Right cardiac atrium (tissue), 5 donors: ENCODE measurements at regions of chr17 and their contacts with region 1.

Region 1: GRCh38 chr17:76506408-76507349 is 5.5 kb upstream of the RHBDF2 start:
- DNase-seq: peak; percentile 76 to 93 (median 91)
- ATAC-seq: peak; percentile 64 to 77
- H3K4me3 ChIP-seq: no peak overlapping the region
- H3K27ac ChIP-seq: no peak overlapping the region
- H3K4me1 ChIP-seq: peaks cover 6% of the 10 kb centered on the region
- H3K27me3 ChIP-seq: no peaks in the 10 kb centered on the region

Region 2: GRCh38 chr17:76292567-76292966 is 214.1 kb before region 1 on chr17:
- intact Hi-C with region 1: no loop called
- DNase-seq: peak in 2 of 3 donors; percentile 18 to 32
- ATAC-seq: no peak
- H3K4me3 ChIP-seq: no peak overlapping the region
- H3K27ac ChIP-seq: no peak overlapping the region
- H3K4me1 ChIP-seq: no peaks in the 10 kb centered on the region
- H3K27me3 ChIP-seq: no peaks in the 10 kb centered on the region

Region 3: GRCh38 chr17:76458580-76459490 is 47.8 kb before region 1 on chr17:
- intact Hi-C with region 1: loop called in 1 of 4 experiments (anchors 2 kb)
- DNase-seq: peak in 2 of 3 donors; percentile 74 to 80
- ATAC-seq: peak; percentile 67 to 70
- H3K4me3 ChIP-seq: no peak overlapping the region
- H3K27ac ChIP-seq: no peak overlapping the region
- H3K4me1 ChIP-seq: no peaks in the 10 kb centered on the region
- H3K27me3 ChIP-seq: no peaks in the 10 kb centered on the region

Region 4: DNA sequence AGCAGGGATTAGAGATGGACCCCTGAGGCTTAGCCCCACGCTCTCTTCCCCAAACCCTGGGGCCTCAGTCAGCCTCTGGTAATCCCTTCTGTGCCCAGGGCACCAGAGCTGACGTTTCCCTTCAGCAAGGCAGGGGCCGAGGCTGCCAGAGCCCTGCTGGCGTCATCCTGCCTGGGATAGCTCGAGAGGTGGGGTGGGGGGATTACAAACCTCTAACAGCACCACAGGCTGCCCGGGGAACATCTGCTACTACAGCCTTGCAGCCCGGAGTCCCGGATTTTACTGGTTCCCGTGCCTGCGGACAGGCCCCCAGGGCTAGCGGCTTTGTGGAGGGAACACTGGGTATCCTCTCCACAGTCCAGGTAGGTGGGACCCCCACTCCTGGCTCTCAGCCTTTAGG is 39.3 kb before region 1 on chr17 and contains the start of gene AANAT:
- intact Hi-C with region 1: loop called (anchors 1 to 5 kb)
- DNase-seq: peak in 1 of 3 donors; percentile 55
- ATAC-seq: no peak
- H3K4me3 ChIP-seq: no peak within 1 kb of the TSS
- H3K27ac ChIP-seq: no peak within 1 kb of the TSS
- H3K4me1 ChIP-seq: peaks cover 2% of the 10 kb centered on the region
- H3K27me3 ChIP-seq: no peaks in the 10 kb centered on the region
- total RNA-seq, gene AANAT: not detected